ENCODE measurements at regions of chr3 and their contacts with region 1.

Region 1: GRCh38 chr3:184777336-184778004 is 34.5 kb upstream of the VPS8 start:
- DNase-seq: peak; percentile 24
- H3K4me3 ChIP-seq: no peak overlapping the region
- H3K27ac ChIP-seq: no peak overlapping the region
- H3K4me1 ChIP-seq: peaks cover 0 to 6% (median 0%) of the 10 kb centered on the region in 3 donors
- H3K27me3 ChIP-seq: peaks cover 0 to 28% (median 0%) of the 10 kb centered on the region in 4 donors
- CTCF ChIP-seq: peak; percentile 71 to 96 (median 92)
- POLR2A ChIP-seq: no peak

Region 2: DNA sequence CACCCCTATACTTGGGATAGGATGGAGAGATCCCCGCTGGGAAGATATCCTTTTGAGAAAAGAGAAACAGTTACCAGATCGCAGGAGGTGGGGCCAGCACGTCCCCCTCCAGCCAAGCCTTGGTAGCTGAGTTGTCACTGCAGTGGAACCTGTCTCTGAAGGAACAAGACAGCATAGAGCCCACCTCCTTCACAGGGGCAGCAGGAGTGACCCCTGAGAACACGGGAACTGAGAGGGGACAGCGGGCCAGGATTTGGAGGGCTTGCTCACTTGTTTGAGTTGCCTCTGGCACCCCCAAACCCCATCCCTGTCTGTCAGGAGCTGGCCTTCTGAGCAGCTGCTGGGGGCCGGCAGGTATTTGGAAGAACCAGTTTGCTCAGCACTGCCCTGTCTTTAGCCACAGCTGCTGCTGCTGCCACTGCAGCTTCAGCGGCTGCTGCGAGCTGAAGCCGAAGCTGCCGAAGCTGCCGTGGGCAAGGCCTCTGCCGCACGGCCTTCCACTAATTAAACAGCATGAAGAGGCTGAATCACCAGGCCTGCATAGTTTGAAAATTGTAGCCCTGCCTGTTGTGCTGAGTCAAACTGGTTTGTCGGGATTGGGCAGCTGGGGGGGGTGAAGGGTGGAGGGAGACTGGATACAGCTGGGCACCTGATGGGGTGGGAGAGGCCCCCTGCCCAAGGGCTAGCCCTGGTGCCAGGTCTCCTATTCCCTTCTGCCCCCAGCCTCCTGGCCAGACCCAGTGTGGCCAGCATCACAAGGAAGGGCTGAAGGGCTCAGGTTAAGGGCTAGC is 211.9 kb before region 1 on chr3:
- intact Hi-C with region 1: loop called (anchors 2 kb)
- DNase-seq: no peak
- H3K4me3 ChIP-seq: peak overlapping the region; percentile 14 to 88 (median 64)
- H3K27ac ChIP-seq: peak overlapping the region; percentile 88 to 98 (median 94)
- H3K4me1 ChIP-seq: peaks cover 61 to 94% (median 64%) of the 10 kb centered on the region in 3 donors
- H3K27me3 ChIP-seq: peaks cover 0 to 16% (median 0%) of the 10 kb centered on the region in 4 donors
- CTCF ChIP-seq: no peak
- POLR2A ChIP-seq: peak in 2 of 4 donors; percentile 41 to 65

Region 3: DNA sequence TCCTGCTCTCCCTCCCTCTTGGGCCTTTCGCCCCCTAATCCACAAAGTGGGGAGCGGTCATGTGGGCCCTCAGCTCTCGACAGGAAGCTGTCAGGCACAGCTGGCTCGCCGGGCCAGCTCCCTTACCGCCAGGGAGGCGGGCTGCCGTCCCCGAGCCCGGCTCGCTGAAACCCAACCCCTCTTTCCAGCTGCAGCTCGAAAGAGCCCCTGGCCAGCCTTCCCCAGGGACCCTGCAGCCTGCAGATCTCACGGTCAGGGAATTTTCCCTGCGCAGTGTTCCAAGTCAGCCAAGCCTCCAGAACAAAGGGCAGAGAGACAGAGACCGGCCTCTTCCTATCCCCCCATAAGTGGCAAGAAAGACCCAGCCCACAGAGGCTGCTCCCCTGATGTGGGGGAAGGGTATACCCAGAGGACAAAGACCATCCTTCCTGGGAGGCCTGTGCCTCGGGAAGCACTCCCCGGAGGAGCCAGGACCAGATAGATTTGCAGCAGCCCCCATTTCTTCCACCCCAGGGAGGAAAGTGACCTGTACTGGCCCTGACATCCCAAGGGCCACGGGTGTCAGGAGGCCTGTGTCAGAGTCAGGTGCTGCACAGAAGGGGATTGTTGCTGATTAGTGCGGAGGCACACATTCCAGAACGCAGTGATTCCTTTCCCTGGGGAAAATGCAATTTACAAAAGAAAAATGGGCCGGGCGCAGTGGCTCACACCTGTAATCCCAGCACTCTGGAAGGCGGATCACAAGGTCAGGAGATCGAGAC is 98.2 kb before region 1 on chr3:
- intact Hi-C with region 1: no loop called
- DNase-seq: no peak
- H3K4me3 ChIP-seq: peak overlapping the region in 1 of 4 donors; percentile 30
- H3K27ac ChIP-seq: peak overlapping the region in 1 of 4 donors; percentile 9
- H3K4me1 ChIP-seq: peaks cover 0 to 14% (median 7%) of the 10 kb centered on the region in 3 donors
- H3K27me3 ChIP-seq: no peaks in the 10 kb centered on the region
- CTCF ChIP-seq: no peak
- POLR2A ChIP-seq: no peak

Region 4: DNA sequence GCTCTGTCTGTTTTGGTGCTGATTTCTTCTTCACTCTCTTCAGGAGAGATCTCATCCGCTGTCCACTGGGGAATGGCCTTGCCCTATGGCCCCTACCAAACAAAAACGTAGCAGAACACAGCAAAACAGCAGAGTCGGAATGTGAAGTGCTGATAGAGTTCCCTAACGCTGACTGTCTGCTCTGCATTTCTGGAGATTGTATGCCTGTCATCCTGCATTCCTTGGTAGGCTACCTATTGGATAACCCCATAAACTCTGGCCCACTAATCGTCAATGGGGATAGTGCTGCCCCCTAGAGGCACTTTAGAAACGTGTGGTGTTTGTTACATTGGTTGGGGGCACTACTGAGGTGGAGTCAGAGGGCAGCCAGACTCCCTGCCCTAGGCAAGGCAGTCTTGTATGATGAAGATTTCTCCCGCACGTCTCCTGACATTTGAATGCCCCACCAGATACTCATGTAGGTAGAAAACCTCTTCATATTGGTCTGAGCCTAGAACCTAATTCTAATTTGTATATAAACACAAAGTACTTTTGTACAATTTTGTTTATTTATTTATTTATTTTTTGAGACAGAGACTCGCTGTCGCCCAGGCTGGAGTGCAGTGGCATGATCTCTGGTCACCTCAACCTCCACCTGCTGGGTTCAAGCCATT is 50.0 kb before region 1 on chr3:
- intact Hi-C with region 1: loop called (anchors 10 kb)
- DNase-seq: no peak
- H3K4me3 ChIP-seq: no peak overlapping the region
- H3K27ac ChIP-seq: no peak overlapping the region
- H3K4me1 ChIP-seq: peaks cover 0 to 11% (median 0%) of the 10 kb centered on the region in 3 donors
- H3K27me3 ChIP-seq: no peaks in the 10 kb centered on the region
- CTCF ChIP-seq: peak; percentile 13 to 77 (median 68)
- POLR2A ChIP-seq: no peak

Measured in esophagus squamous epithelium (tissue), 5 donors.